PC-9 (cell line): ENCODE measurements at regions of chr9 and their contacts with region 1.

Region 1: GRCh38 chr9:128094166-128094967 is 26.3 kb downstream of the SLC25A25 start:
- DNase-seq: peak; percentile 96 to 98
- H3K4me3 ChIP-seq: peak overlapping the region; percentile 10; the same call in 1 of the 2 replicates
- H3K27ac ChIP-seq: peak overlapping the region; percentile 81
- H3K4me1 ChIP-seq: peaks cover 31% of the 10 kb centered on the region
- H3K27me3 ChIP-seq: no peaks in the 10 kb centered on the region
- CTCF ChIP-seq: no peak

Region 2: DNA sequence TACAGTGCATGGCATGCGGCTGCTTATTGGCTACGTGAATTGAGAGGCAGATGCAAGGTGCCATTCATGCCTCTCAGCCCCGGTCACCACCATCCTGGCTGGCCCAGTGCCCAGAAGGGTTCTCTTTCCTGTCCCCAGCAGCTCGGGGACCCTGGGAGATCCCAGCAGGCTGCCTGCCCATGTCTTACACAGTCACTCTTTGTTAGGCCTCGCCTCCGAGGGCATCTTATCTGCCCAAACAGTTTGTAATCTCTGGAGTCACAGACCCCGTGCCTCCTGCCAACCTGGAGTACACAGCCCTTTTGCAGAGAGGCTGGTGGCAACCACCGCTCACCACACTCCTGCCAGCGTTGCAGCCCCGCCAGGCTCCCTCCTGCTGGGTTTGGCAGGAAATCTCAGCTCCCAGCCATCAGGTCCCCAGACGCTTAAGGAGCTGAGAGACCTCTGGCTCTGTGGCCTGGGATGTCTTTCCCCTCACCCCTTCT is 209.9 kb before region 1 on chr9:
- CTCF ChIA-PET with region 1: no interaction called
- POLR2A ChIA-PET with region 1: no interaction called
- intact Hi-C with region 1: no loop called
- DNase-seq: peak in 1 of 2 experiments; percentile 54
- H3K4me3 ChIP-seq: no peak overlapping the region
- H3K27ac ChIP-seq: no peak overlapping the region
- H3K4me1 ChIP-seq: no peaks in the 10 kb centered on the region
- H3K27me3 ChIP-seq: no peaks in the 10 kb centered on the region
- CTCF ChIP-seq: no peak

Region 3: GRCh38 chr9:127937388-127938280 is 156.7 kb before region 1 on chr9 and contains the start of gene DPM2:
- CTCF ChIA-PET with region 1: no interaction called
- POLR2A ChIA-PET with region 1: no interaction called
- intact Hi-C with region 1: loop called (anchors 2 kb)
- DNase-seq: peak; percentile 74 to 77
- H3K4me3 ChIP-seq: peak within 1 kb of the TSS; percentile 83
- H3K27ac ChIP-seq: peak within 1 kb of the TSS; percentile 25; the same call in 1 of the 2 replicates
- H3K4me1 ChIP-seq: peaks cover 17% of the 10 kb centered on the region
- H3K27me3 ChIP-seq: no peaks in the 10 kb centered on the region
- CTCF ChIP-seq: no peak
- total RNA-seq, gene DPM2: 65.5 and 79.4 TPM in 2 replicates

Region 4: DNA sequence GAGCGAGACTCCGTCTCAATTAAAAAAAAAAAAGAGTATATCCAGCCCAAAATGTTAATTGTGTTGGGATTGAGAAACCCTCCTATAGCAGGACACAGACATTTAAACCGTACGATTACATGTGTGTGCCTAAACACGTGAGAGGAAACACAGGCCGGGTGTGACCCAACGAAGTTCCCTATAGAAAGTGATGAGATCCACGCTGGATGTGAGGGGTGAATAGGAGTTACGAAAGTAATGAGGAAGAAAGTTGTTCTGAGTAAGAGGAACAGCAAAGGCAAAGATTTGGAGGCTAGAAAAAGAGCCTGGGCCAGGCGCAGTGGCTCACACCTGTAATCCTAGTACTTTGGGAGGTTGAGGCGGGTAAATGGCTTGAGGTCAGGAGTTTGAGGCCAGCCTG is 40.8 kb before region 1 on chr9:
- CTCF ChIA-PET with region 1: no interaction called
- POLR2A ChIA-PET with region 1: interaction called, 6 read pairs
- intact Hi-C with region 1: loop called (anchors 5 kb)
- DNase-seq: no peak
- H3K4me3 ChIP-seq: no peak overlapping the region
- H3K27ac ChIP-seq: no peak overlapping the region
- H3K4me1 ChIP-seq: peaks cover 32% of the 10 kb centered on the region
- H3K27me3 ChIP-seq: no peaks in the 10 kb centered on the region
- CTCF ChIP-seq: no peak

Region 5: DNA sequence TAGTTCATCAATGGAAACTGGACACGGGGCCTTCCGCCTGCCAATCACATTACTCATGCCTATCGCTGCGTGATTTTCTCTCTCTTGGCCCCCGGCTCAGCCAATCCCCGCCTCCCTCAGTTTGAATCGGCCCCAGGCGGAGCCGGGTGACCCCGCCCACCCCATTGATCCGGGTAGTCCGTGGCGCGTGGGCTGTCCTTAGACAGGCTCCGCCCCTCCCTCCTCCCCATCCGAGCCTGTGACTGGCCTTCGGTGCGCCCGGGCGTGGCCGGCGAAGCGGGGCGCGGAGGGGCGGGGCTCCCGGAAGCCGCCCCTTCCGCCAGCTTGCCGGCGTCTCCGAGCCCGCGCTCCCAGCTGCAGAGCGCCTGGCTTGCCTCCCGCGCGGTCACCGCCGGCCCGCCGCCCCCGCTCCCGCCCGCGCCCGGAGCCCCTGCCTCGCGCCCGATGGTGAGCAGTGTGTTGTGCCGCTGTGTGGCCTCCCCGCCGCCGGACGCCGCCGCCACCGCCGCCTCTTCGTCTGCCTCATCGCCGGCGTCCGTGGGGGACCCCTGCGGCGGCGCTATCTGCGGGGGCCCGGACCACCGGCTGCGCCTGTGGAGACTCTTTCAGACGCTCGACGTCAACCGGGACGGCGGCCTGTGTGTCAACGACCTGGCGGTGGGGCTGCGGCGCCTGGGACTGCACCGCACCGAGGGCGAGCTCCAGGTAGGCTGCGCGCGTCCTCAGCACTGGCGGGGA is 26.3 kb before region 1 on chr9 and contains the start of gene SLC25A25:
- CTCF ChIA-PET with region 1: interaction called, 5 read pairs
- POLR2A ChIA-PET with region 1: interaction called, 5 read pairs
- intact Hi-C with region 1: loop called (anchors 2 kb)
- DNase-seq: peak; percentile 96 to 100
- H3K4me3 ChIP-seq: peak within 1 kb of the TSS; percentile 87
- H3K27ac ChIP-seq: peak within 1 kb of the TSS; percentile 94
- H3K4me1 ChIP-seq: peaks cover 42% of the 10 kb centered on the region
- H3K27me3 ChIP-seq: no peaks in the 10 kb centered on the region
- CTCF ChIP-seq: no peak
- total RNA-seq, gene SLC25A25: 11.7 and 13.4 TPM in 2 replicates

Region 6: GRCh38 chr9:128078504-128079434 is 15.6 kb before region 1 on chr9:
- CTCF ChIA-PET with region 1: interaction called, 4 read pairs
- POLR2A ChIA-PET with region 1: interaction called, 8 read pairs
- intact Hi-C with region 1: loop called (anchors 1 kb)
- DNase-seq: peak; percentile 79 to 94
- H3K4me3 ChIP-seq: no peak overlapping the region
- H3K27ac ChIP-seq: peak overlapping the region; percentile 74
- H3K4me1 ChIP-seq: peaks cover 42% of the 10 kb centered on the region
- H3K27me3 ChIP-seq: no peaks in the 10 kb centered on the region
- CTCF ChIP-seq: no peak

Region 7: GRCh38 chr9:128552153-128552743 is 457.9 kb after region 1 on chr9 and contains the start of gene SPTAN1:
- CTCF ChIA-PET with region 1: interaction called, 13 read pairs
- POLR2A ChIA-PET with region 1: no interaction called
- intact Hi-C with region 1: no loop called
- DNase-seq: peak; percentile 56 to 91
- H3K4me3 ChIP-seq: peak within 1 kb of the TSS; percentile 75
- H3K27ac ChIP-seq: peak within 1 kb of the TSS; percentile 32; the same call in 1 of the 2 replicates
- H3K4me1 ChIP-seq: peaks cover 39% of the 10 kb centered on the region
- H3K27me3 ChIP-seq: no peaks in the 10 kb centered on the region
- CTCF ChIP-seq: no peak
- total RNA-seq, gene SPTAN1: 214 and 239 TPM in 2 replicates